Pancreas (tissue), 10 donors: ENCODE measurements at regions of chr20 and their contacts with region 1.

Region 1: GRCh38 chr20:53547664-53548239 is 45.9 kb downstream of the ZNF217 start:
- DNase-seq: peak in 2 of 6 donors; percentile 26 to 55
- ATAC-seq: peak; percentile 85 to 93 (median 90)
- H3K4me3 ChIP-seq: no peak overlapping the region
- H3K27ac ChIP-seq: no peak overlapping the region
- H3K4me1 ChIP-seq: no peaks in the 10 kb centered on the region
- H3K27me3 ChIP-seq: no peaks in the 10 kb centered on the region
- CTCF ChIP-seq: peak; percentile 30 to 68 (median 54)

Region 2: DNA sequence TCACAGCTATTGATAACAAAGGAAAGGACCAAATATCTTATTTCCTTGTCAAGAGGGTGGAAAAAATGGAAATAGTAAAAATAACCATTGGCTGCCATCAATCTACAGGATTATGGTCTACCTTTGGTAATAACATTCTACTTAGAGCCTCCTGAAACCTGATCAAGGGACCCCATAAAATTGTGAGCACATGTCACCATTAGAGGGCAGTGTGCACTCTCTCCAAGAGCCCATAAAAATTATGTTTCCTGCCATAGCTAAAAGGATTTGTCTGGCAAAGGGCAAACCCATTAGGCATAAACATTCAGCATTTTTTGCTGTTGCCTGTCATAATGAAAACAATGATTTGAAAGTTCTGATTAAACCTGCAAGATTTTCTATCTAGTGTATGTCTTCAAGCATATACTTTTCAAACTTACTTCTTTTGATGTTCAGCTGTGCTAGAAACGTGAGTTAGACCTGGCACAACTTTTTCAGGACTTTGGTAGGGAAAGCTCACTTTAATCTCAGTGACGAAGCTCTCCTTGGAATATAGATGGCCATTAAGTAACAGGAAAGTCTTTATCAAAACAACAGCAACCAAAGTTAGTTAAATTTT is 1235.5 kb before region 1 on chr20:
- intact Hi-C with region 1: loop called in 2 of 3 experiments (anchors 5 to 10 kb)
- DNase-seq: peak in 3 of 6 donors; percentile 16 to 46 (median 16)
- ATAC-seq: peak; percentile 46 to 89 (median 86)
- H3K4me3 ChIP-seq: no peak overlapping the region
- H3K27ac ChIP-seq: no peak overlapping the region
- H3K4me1 ChIP-seq: no peaks in the 10 kb centered on the region
- H3K27me3 ChIP-seq: peaks cover 0 to 3% (median 0%) of the 10 kb centered on the region in 4 donors
- CTCF ChIP-seq: peak; percentile 34 to 74 (median 66)

Region 3: DNA sequence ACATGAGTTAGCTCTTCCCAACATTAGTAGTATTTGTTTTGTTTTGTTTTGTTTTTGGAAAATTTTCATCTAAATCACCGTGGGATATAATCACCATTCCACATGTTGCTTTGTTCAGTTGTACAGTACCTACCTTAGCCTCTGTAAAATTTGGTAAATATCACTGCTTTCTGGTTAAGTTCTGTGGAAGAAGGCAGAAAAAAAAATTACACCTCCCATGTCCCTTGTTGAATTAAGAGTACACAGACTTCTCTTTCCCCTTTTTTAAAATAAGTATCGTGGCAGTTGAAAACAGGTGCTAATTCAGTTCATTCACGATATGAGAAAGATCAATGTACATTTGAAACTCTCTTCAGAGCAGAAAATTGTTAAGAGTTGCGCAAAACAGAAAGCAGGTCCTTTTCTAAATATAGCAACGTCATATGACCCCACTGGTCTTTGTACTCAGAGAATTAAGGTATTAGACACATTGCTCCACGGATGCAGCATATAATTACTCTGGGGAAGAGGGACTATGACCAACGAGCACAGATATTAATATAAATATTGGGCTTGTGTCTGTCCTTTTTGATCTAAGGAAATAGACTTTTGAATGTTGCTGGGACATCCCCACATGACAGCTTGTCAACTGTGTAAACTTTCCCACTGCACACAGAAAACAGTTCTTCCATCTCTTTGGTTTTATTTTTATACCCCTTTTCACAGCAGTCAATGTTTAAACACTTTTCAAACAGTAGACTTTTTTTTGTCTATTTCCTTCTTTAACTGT is 104.5 kb after region 1 on chr20:
- intact Hi-C with region 1: no loop called
- DNase-seq: no peak
- ATAC-seq: peak; percentile 75 to 89 (median 83)
- H3K4me3 ChIP-seq: no peak overlapping the region
- H3K27ac ChIP-seq: peak overlapping the region in 3 of 4 donors; percentile 41 to 87 (median 87)
- H3K4me1 ChIP-seq: peaks cover 0 to 41% (median 40%) of the 10 kb centered on the region in 3 donors
- H3K27me3 ChIP-seq: no peaks in the 10 kb centered on the region
- CTCF ChIP-seq: no peak